ENCODE measurements at regions of chr4 and their contacts with region 1.

Region 1: GRCh38 chr4:170853422-170854021 is 763.8 kb upstream of the AADAT start:
- DNase-seq: peak; percentile 4
- ATAC-seq: no peak
- H3K4me3 ChIP-seq: no peak overlapping the region
- H3K27ac ChIP-seq: no peak overlapping the region
- H3K4me1 ChIP-seq: no peaks in the 10 kb centered on the region
- H3K27me3 ChIP-seq: no peaks in the 10 kb centered on the region
- CTCF ChIP-seq: peak; percentile 68

Region 2: DNA sequence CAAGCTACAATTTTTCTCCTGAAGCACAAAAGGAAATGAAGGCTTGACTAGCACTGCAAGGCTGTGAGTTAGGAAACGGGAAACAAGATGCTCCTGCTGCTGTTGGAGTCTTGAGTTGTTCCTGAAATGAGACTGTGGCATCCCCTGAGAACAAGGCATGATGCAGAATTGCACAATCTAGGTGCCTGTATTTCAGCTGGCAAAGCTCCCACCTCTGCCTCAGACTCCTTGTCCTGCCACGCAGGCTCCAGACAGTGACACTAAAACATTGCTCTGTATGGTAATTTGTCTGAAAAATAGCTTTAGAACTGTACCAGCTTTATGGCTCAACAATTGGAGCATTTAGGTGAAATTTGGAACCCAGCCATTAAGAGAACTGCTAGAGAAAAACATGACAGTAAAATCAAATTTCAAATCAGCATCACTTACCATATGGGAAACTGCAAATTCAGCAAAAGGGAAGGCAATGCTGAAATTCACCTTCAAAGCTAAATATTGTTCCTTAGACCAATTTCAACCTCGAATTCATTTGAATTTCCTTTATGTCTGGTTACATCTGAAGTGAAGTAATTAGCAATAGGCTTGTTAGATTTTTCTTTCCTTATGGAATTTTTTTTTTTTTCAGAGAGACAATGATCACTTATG is 930.8 kb before region 1 on chr4:
- CTCF ChIA-PET with region 1: no interaction called
- POLR2A ChIA-PET with region 1: no interaction called
- in situ Hi-C with region 1: no loop called
- intact Hi-C with region 1: no loop called
- DNase-seq: no peak
- ATAC-seq: no peak
- H3K4me3 ChIP-seq: no peak overlapping the region
- H3K27ac ChIP-seq: no peak overlapping the region
- H3K4me1 ChIP-seq: no peaks in the 10 kb centered on the region
- H3K27me3 ChIP-seq: no peaks in the 10 kb centered on the region
- CTCF ChIP-seq: no peak

Region 3: GRCh38 chr4:170589597-170590191 is 263.8 kb before region 1 on chr4:
- CTCF ChIA-PET with region 1: no interaction called
- POLR2A ChIA-PET with region 1: no interaction called
- in situ Hi-C with region 1: no loop called
- intact Hi-C with region 1: loop called (anchors 10 kb)
- DNase-seq: peak; percentile 8
- ATAC-seq: no peak
- H3K4me3 ChIP-seq: no peak overlapping the region
- H3K27ac ChIP-seq: no peak overlapping the region
- H3K4me1 ChIP-seq: no peaks in the 10 kb centered on the region
- H3K27me3 ChIP-seq: no peaks in the 10 kb centered on the region
- CTCF ChIP-seq: peak; percentile 14; the same call in 1 of the 2 replicates

Measured in Panc1 (cell line).